OCI-LY7 (cell line): ENCODE measurements at regions of chr17 and their contacts with region 1.

Region 1: DNA sequence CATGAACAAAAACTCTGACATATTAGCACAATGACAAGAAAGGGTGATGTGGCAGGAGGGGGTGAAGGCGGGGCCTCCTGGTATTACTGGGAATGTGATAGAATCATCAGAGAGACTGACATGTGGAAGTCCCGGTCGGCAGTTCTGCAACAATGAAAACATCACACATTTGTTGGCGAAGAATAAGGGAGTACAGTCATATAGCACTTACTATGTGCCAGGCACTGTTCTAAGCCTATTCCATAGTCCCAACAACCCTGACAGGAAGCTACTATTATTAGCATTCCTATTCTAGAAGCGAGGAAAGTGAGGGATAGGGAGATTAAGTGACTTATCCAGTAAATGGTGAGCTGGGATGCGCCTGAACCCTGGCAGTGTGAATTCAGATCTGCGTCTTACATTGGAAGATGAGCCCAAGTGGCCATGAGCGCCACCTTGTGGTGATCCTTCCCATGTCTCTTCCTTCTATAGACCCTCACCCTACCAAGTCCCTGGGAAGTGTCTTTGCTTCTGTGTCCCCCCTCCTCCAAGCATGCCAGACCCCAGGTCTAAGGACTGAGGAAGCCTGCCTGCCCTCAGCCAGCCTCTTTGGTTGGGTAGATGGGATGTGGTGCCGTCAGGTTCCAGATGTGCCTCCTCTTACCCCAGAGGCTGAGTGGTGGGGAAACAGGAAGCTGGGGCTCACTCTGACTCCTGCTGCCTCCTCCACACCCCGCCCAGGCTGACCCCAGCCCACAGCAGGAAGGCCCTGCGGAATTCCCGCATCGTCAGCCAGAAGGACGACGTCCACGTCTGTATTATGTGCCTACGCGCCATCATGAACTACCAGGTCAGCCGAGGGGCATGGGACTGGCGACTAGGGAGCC is 14.0 kb downstream of the FMNL1 start:
- DNase-seq: peak; percentile 79
- H3K4me3 ChIP-seq: no peak overlapping the region
- H3K27ac ChIP-seq: peak overlapping the region; percentile 3
- H3K4me1 ChIP-seq: peaks cover 19% of the 10 kb centered on the region
- CTCF ChIP-seq: peak; percentile 93

Region 2: GRCh38 chr17:45218895-45219661 is 16.6 kb before region 1 on chr17:
- CTCF ChIA-PET with region 1: interaction called, 14 read pairs
- POLR2A ChIA-PET with region 1: interaction called, 3 read pairs
- intact Hi-C with region 1: loop called (anchors 1 kb)
- DNase-seq: peak; percentile 80
- H3K4me3 ChIP-seq: no peak overlapping the region
- H3K27ac ChIP-seq: no peak overlapping the region
- H3K4me1 ChIP-seq: peaks cover 24% of the 10 kb centered on the region
- CTCF ChIP-seq: peak; percentile 97